Activated CD4-positive, alpha-beta memory T cell treated with anti-CD3 and anti-CD28 coated beads for 36 hours (primary cell): ENCODE measurements at regions of chr11 and their contacts with region 1.

Region 1: GRCh38 chr11:134223836-134224709 is at the starts of genes NCAPD3 and VPS26B:
- DNase-seq: peak; percentile 98
- H3K4me3 Mint-ChIP-seq: peak within 1 kb of the TSS; percentile 98
- H3K27ac Mint-ChIP-seq: peak within 1 kb of the TSS; percentile 97
- H3K4me1 Mint-ChIP-seq: peaks cover 54% of the 10 kb centered on the region
- H3K27me3 Mint-ChIP-seq: no peaks in the 10 kb centered on the region
- total RNA-seq, gene NCAPD3: 94.6 to 101 TPM
- total RNA-seq, gene VPS26B: 36.2 to 38.8 TPM

Region 2: GRCh38 chr11:133947321-133947756 is 276.7 kb before region 1 on chr11:
- CTCF ChIA-PET with region 1: no interaction called
- POLR2A ChIA-PET with region 1: interaction called, 4 read pairs
- intact Hi-C with region 1: loop called (anchors 2 kb)
- DNase-seq: peak; percentile 83
- H3K4me3 Mint-ChIP-seq: peak overlapping the region; percentile 33
- H3K27ac Mint-ChIP-seq: peak overlapping the region; percentile 42
- H3K4me1 Mint-ChIP-seq: peaks cover 67% of the 10 kb centered on the region
- H3K27me3 Mint-ChIP-seq: no peaks in the 10 kb centered on the region

Region 3: DNA sequence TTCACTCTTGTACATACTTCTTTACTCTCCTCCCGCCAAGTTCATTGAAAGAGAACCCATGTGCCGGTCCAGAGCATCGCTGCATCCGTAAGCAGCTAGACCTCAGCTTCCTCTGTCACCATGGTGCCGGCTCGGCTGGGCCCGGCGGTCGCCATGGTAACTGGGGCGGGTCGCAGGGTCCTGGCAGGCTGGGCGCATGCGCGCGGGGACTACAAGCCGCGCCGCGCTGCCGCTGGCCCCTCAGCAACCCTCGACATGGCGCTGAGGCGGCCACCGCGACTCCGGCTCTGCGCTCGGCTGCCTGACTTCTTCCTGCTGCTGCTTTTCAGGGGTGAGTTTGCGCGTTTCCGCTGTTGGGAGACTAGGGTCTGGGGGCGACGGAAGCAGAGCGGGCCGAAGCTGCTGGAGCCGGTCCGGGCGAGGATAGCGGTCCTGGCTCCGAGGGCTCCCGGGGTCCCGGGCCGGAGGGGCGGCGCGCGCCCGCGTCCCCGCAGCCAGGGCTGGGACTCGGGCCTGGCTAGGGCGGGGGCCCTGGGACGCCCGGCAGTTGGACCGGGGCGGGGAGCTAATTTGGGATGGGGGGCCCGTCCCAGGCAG is 155.1 kb before region 1 on chr11 and contains the start of gene JAM3:
- CTCF ChIA-PET with region 1: no interaction called
- POLR2A ChIA-PET with region 1: interaction called, 4 read pairs
- intact Hi-C with region 1: loop called (anchors 10 kb)
- DNase-seq: peak; percentile 96
- H3K4me3 Mint-ChIP-seq: peak within 1 kb of the TSS; percentile 90
- H3K27ac Mint-ChIP-seq: no peak within 1 kb of the TSS
- H3K4me1 Mint-ChIP-seq: peaks cover 10% of the 10 kb centered on the region
- H3K27me3 Mint-ChIP-seq: peaks cover 6% of the 10 kb centered on the region
- total RNA-seq, gene JAM3: 6.3 to 9.0 TPM

Region 4: GRCh38 chr11:134181707-134182106 is 42.4 kb before region 1 on chr11:
- CTCF ChIA-PET with region 1: no interaction called
- POLR2A ChIA-PET with region 1: no interaction called
- intact Hi-C with region 1: no loop called
- DNase-seq: no peak
- H3K4me3 Mint-ChIP-seq: no peak overlapping the region
- H3K27ac Mint-ChIP-seq: no peak overlapping the region
- H3K4me1 Mint-ChIP-seq: no peaks in the 10 kb centered on the region
- H3K27me3 Mint-ChIP-seq: no peaks in the 10 kb centered on the region

Region 5: DNA sequence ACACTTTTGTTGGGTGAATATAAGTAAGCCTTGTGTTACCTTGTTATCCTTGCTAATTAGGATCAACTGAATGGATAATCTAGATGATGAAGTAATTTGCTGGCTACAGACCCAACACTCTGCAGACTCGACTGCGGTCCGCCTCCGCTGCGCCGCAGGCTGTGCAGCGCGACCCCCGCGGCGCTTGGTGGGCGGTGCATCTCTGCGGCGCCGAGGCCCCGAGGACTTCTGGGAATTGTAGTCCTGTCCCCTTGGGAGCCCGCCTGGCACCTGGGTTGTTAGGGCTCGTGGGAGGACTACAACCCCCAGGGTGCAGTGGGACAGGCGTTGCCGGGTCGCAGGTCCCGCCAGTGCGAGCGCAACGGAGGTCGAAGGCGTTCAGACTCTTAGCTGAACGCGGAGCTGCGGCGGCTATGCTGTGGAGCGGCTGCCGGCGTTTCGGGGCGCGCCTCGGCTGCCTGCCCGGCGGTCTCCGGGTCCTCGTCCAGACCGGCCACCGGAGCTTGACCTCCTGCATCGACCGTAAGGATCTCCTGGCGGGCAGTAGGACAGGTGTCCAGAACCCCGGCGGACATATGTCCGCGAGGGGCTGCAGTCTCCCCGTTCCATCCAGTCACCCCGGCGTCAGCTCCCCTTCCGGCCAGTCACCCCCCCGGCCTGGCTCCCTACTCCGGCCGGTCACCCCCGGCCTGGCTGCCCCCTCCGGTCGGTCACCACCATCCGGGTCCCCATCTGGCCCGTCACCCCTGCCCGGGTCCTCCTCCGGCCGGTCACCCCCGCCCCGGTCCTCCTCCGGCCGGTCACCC is 29.3 kb after region 1 on chr11 and contains the starts of genes ACAD8 and THYN1:
- CTCF ChIA-PET with region 1: interaction called, 12 read pairs
- POLR2A ChIA-PET with region 1: interaction called, 67 read pairs
- intact Hi-C with region 1: loop called (anchors 1 kb)
- DNase-seq: peak; percentile 97
- H3K4me3 Mint-ChIP-seq: peak within 1 kb of the TSS; percentile 89
- H3K27ac Mint-ChIP-seq: peak within 1 kb of the TSS; percentile 89
- H3K4me1 Mint-ChIP-seq: peaks cover 40% of the 10 kb centered on the region
- H3K27me3 Mint-ChIP-seq: no peaks in the 10 kb centered on the region
- total RNA-seq, gene ACAD8: 20.9 to 22.1 TPM
- total RNA-seq, gene THYN1: 74.0 to 74.3 TPM

Region 6: DNA sequence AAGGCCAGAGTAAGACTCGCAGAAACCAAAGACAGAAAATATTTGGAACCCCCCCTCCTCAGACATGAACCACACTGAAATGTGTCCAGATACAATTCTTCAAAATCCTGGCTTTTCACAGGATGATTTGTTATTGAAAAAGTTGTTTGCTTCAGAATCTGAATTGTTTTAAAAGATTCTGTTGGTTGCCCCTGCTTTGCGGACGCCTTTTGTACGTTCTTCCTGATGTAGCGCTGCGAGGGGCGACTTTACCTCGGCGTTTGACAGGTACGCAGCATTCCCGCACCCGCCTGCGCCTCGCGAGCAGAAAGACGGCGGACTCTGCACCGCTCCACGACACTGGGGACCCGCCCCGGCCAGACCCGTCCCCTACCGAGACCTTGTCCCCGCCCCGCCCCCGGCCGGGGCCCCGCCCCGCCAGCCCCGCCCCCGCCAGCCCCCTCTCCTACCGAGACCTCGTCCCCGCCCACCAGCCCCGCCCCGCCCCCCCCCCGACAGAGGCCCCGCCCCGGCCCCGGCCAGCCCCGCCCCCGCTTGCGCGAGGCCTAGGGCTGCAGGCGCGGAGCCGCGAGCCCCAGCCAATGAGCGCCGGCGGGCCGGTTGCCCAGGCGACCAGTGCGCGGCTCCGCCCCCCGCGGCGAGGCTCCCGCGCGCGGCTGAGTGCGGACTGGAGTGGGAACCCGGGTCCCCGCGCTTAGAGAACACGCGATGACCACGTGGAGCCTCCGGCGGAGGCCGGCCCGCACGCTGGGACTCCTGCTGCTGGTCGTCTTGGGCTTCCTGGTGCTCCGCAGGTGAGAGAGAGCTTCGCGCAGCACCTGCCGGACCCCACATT is 107.5 kb after region 1 on chr11 and contains the start of gene GLB1L2:
- CTCF ChIA-PET with region 1: no interaction called
- POLR2A ChIA-PET with region 1: interaction called, 7 read pairs
- intact Hi-C with region 1: loop called (anchors 2 kb)
- DNase-seq: peak; percentile 82
- H3K4me3 Mint-ChIP-seq: peak within 1 kb of the TSS; percentile 67
- H3K27ac Mint-ChIP-seq: no peak within 1 kb of the TSS
- H3K4me1 Mint-ChIP-seq: peaks cover 10% of the 10 kb centered on the region
- H3K27me3 Mint-ChIP-seq: peaks cover 20% of the 10 kb centered on the region
- total RNA-seq, gene GLB1L2: 3.8 to 4.1 TPM